ENCODE measurements at regions of chr4 and their contacts with region 1.

Region 1: DNA sequence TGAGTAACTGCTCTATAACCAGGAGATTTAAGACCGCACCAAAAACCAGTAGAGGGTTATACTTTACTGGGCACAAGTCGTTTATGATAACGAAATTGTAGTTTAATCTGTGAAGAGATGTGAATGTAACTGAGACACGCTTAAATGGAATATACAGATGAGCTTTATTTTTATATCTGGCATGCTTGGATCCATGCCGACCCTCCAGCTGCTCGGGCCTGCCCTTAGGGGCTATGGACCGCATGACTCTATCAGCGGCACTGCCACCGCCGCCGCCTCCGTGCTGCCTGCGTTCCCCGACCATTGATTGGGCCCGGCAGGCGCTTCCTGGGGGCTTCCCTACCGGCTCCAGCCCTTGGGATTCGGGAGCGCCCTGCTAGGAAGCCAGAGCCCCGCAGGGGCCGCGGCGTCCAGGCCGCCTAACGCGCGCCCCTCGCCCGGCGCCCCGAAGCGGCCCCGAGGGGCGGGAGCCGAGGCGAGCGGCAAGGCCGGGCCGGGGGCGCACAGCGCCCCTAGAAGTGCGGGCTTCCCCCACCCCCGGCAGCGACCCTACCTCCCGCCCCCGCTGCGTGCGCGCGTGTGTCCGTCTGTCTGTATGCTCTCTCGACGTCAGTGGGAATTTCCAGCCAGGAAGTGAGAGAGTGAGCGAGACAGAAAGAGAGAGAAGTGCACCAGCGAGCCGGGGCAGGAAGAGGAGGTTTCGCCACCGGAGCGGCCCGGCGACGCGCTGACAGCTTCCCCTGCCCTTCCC is at the start of gene NFKB1:
- DNase-seq: peak; percentile 74
- H3K4me3 Mint-ChIP-seq: peak within 1 kb of the TSS; percentile 96
- H3K27ac Mint-ChIP-seq: peak within 1 kb of the TSS; percentile 89
- H3K4me1 Mint-ChIP-seq: peaks cover 29% of the 10 kb centered on the region
- H3K27me3 Mint-ChIP-seq: no peaks in the 10 kb centered on the region
- total RNA-seq, gene NFKB1: 199 and 205 TPM in 2 replicates

Region 2: GRCh38 chr4:101103381-101104142 is 1397.3 kb before region 1 on chr4:
- intact Hi-C with region 1: no loop called
- DNase-seq: no peak
- H3K4me3 Mint-ChIP-seq: peak overlapping the region; percentile 11
- H3K27ac Mint-ChIP-seq: peak overlapping the region; percentile 52
- H3K4me1 Mint-ChIP-seq: peaks cover 25% of the 10 kb centered on the region
- H3K27me3 Mint-ChIP-seq: no peaks in the 10 kb centered on the region

Region 3: GRCh38 chr4:102525097-102525496 is 24.2 kb after region 1 on chr4:
- intact Hi-C with region 1: loop called (anchors 2 kb)
- DNase-seq: no peak
- H3K4me3 Mint-ChIP-seq: no peak overlapping the region
- H3K27ac Mint-ChIP-seq: peak overlapping the region; percentile 53
- H3K4me1 Mint-ChIP-seq: peaks cover 83% of the 10 kb centered on the region
- H3K27me3 Mint-ChIP-seq: no peaks in the 10 kb centered on the region

Region 4: DNA sequence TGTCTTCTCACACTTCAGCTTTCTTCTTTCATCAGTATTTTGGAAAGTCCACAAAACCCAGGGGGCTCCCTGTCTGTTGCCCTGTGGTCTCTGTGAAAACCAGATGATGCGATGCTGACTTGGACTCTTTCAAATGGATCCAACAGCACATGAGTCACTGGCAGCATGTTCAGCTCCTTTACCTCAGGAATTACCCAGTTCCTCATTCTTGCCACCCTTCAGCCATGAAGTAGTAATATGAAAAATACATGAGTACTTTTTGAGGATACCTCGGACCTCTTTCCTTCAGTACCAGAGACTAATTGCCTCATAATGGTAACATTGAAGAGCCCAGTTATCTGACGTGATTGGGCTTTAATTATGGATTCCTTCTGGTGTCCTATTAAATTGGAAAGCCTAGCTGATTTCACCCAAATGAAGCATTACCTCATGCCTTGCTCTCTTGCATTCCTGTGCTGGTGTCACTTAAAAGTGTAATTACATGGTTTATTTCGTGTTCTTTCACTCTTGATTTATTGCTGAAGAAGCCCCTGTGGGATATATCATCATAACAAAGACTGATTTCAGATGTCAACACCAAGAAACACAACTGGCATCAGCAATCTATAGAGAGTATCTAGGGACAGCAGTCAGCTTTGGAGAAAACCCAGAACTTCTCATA is 63.7 kb after region 1 on chr4:
- intact Hi-C with region 1: loop called (anchors 2 kb)
- DNase-seq: no peak
- H3K4me3 Mint-ChIP-seq: no peak overlapping the region
- H3K27ac Mint-ChIP-seq: peak overlapping the region; percentile 62
- H3K4me1 Mint-ChIP-seq: peaks cover 69% of the 10 kb centered on the region
- H3K27me3 Mint-ChIP-seq: no peaks in the 10 kb centered on the region

Region 5: GRCh38 chr4:102610007-102610406 is 109.1 kb after region 1 on chr4:
- intact Hi-C with region 1: loop called (anchors 5 kb)
- DNase-seq: no peak
- H3K4me3 Mint-ChIP-seq: no peak overlapping the region
- H3K27ac Mint-ChIP-seq: peak overlapping the region; percentile 39
- H3K4me1 Mint-ChIP-seq: peaks cover 76% of the 10 kb centered on the region
- H3K27me3 Mint-ChIP-seq: no peaks in the 10 kb centered on the region

Region 6: GRCh38 chr4:102717448-102718092 is 216.7 kb after region 1 on chr4:
- intact Hi-C with region 1: no loop called
- DNase-seq: no peak
- H3K4me3 Mint-ChIP-seq: no peak overlapping the region
- H3K27ac Mint-ChIP-seq: no peak overlapping the region
- H3K4me1 Mint-ChIP-seq: peaks cover 6% of the 10 kb centered on the region
- H3K27me3 Mint-ChIP-seq: no peaks in the 10 kb centered on the region

Region 7: GRCh38 chr4:102868781-102869568 is 368.1 kb after region 1 on chr4 and contains the start of gene CISD2:
- intact Hi-C with region 1: loop called (anchors 2 kb)
- DNase-seq: peak; percentile 93
- H3K4me3 Mint-ChIP-seq: peak within 1 kb of the TSS; percentile 90
- H3K27ac Mint-ChIP-seq: peak within 1 kb of the TSS; percentile 99
- H3K4me1 Mint-ChIP-seq: peaks cover 48% of the 10 kb centered on the region
- H3K27me3 Mint-ChIP-seq: no peaks in the 10 kb centered on the region
- total RNA-seq, gene CISD2: 50.8 and 51.4 TPM in 2 replicates

Measured in activated T-helper 2 cell treated with anti-CD3 and anti-CD28 coated beads, Interferon-gamma antibody, Interleukin-2, Interleukin-4, amounts not matched to agents 10 μg/mL and 5 μg/mL and 100 μg/mL, durations not matched to agents 14 hours and 24 hours and 36 hours (primary cell).